Activated T-helper 1 cell treated with anti-CD3 and anti-CD28 coated beads, Interleukin-12 subunit alpha, Interleukin-12 subunit beta, Interleukin-2, Interleukin-4 antibody, amounts not matched to agents 30 ng/mL and 10 ng/mL and 1 ng/mL, durations not matched to agents 14 hours and 24 hours and 36 hours (primary cell): ENCODE measurements at regions of chr20 and their contacts with region 1.

Region 1: GRCh38 chr20:63009045-63009961 is 2.5 kb upstream of the BHLHE23 start:
- DNase-seq: peak; percentile 71
- H3K4me3 Mint-ChIP-seq: no peak overlapping the region
- H3K27ac Mint-ChIP-seq: peak overlapping the region; percentile 55
- H3K4me1 Mint-ChIP-seq: peaks cover 7% of the 10 kb centered on the region
- H3K27me3 Mint-ChIP-seq: peaks cover 66% of the 10 kb centered on the region

Region 2: DNA sequence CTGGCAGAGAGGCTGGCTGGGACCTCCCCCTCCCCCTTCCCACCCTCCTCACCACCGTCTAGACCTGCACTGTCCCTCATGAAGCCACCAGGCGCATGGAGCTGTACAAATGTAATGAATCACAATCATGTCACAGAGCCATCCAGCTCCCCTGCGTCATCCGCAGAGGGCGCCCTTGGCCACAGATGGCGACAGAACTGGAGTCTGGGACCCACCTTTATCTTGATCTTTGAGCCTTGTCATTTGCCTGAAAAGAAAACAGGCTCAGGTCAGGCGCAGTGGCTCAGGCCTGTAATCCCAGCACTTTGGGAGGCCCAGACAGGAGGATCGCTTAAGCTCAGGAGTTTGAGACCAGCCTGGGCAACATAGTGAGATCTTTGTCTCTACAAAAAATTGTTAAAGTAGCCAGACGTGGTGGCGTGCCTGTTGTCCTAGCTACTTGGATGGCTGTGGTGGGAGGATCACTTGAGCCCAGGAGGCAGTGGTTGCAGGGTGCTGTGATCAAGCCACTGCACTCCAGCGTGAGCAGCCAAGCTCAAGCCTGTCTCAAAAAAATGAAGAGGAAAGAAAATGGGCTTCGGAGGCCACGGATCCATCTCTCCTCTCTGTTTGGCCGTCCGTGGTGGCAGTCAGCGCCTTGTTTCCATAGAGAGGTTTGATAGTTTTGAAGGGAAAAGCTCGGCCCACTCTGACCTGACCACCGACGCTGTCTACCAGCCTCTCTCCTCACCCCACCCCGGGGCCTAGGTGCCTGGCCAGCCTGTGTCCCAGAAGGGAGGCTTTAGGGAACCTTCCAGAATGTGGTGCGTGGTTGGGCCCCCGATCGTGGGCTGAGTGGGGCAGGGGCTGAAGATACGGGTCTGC is 186.3 kb before region 1 on chr20:
- intact Hi-C with region 1: loop called (anchors 5 kb)
- DNase-seq: no peak
- H3K4me3 Mint-ChIP-seq: no peak overlapping the region
- H3K27ac Mint-ChIP-seq: no peak overlapping the region
- H3K4me1 Mint-ChIP-seq: no peaks in the 10 kb centered on the region
- H3K27me3 Mint-ChIP-seq: peaks cover 4% of the 10 kb centered on the region

Region 3: GRCh38 chr20:62873280-62873679 is 136.0 kb before region 1 on chr20:
- intact Hi-C with region 1: loop called (anchors 1 kb)
- DNase-seq: no peak
- H3K4me3 Mint-ChIP-seq: no peak overlapping the region
- H3K27ac Mint-ChIP-seq: no peak overlapping the region
- H3K4me1 Mint-ChIP-seq: peaks cover 9% of the 10 kb centered on the region
- H3K27me3 Mint-ChIP-seq: peaks cover 3% of the 10 kb centered on the region

Region 4: DNA sequence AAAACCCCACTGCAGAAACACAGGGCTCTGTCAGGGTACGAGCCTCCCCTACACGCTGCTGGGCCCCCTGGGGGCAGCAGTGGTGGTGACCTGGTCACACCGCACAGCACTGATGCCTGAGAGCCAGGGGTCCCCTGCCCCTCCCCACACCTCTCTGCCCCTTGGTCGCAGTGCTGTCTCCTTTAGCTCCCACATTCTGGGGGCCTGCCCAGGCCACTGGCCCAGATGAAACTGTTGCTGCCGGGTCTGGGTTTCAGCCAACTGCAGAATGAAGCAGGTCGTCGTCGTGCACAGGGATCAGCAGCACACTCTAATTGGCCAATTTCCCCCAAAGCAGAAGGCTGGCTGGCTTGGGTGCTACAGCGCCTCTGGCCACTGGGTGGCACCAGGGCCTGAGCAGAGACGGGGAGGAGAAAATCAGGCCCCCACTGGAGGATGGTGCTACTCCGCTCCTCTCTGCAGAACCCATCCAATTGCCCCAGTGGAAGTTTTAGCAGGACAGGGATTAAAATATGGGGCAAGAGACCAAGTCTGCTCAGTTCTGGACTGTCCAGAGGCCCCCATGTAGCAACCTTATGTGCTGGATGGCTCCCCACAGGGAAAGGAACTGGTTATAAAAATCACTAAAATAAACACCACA is 109.1 kb before region 1 on chr20:
- intact Hi-C with region 1: loop called (anchors 1 kb)
- DNase-seq: peak; percentile 60
- H3K4me3 Mint-ChIP-seq: peak overlapping the region; percentile 30
- H3K27ac Mint-ChIP-seq: peak overlapping the region; percentile 70
- H3K4me1 Mint-ChIP-seq: peaks cover 37% of the 10 kb centered on the region
- H3K27me3 Mint-ChIP-seq: no peaks in the 10 kb centered on the region

Region 5: DNA sequence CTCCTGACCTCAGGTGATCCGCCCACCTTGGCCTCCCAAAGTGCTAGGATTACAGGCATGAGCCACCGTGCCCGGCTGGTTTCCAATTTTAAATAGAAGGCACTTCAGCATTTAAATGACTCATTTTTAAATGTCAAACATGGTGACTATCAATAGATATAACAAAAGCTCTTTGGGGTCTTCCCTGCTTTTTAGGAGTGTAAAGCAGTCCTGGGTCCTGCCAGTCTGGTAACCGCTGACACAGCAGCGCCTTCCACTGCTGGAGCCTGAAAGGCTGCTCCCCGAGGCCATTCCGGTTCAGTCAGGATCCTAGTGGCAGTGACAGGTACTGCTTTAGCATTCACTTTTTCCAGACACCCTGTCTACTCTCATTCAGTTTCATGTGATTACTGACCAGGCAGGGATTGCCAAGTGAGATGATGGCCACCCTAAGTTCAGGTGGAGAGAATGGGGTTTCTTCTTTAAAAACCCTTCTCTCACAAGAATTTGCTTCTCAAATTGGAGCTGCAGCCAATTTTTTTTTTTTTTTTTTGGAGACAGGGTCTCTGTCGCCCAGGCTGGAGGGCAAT is 88.1 kb before region 1 on chr20:
- intact Hi-C with region 1: loop called (anchors 5 kb)
- DNase-seq: peak; percentile 54
- H3K4me3 Mint-ChIP-seq: peak overlapping the region; percentile 69
- H3K27ac Mint-ChIP-seq: peak overlapping the region; percentile 86
- H3K4me1 Mint-ChIP-seq: peaks cover 78% of the 10 kb centered on the region
- H3K27me3 Mint-ChIP-seq: no peaks in the 10 kb centered on the region

Region 6: DNA sequence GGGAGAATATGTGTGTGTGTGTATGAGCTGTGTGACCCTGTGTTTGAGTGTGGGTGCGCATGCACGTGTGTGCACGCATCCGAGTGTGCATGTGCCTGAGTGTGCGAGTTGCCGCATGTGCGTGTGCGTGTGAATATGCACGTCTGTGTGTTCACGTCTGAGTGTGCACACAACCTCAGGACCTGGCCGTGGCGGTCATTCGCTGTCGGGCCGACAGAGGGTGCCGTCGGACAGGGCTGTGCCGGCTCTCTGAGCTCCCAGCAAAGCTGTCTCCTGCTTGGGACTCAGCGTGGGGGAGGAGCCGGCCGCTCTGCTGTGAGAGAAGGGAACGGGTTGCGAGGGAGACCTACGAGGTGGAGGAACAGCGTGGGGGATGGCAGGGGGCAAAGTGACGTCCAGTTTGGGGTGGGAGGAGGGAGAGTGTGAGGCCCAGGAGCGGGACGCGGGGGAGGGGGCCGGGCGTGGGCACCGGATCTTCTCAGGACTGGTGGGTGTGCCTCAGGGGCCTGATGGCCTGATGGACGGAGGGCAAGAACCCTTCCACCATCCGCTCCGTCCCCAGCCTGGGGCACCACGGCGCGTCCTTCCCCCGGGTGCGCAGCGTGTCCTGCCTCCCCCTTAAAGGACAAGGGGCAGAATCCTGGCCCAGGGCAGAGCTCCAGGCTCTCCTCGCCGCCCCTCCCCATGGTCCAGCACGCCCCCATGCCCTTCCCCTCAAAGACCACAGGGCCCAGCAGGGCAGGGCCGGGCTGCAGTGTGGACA is 36.9 kb before region 1 on chr20:
- intact Hi-C with region 1: loop called (anchors 1 kb)
- DNase-seq: peak; percentile 78
- H3K4me3 Mint-ChIP-seq: peak overlapping the region; percentile 43
- H3K27ac Mint-ChIP-seq: no peak overlapping the region
- H3K4me1 Mint-ChIP-seq: peaks cover 14% of the 10 kb centered on the region
- H3K27me3 Mint-ChIP-seq: peaks cover 33% of the 10 kb centered on the region

Region 7: DNA sequence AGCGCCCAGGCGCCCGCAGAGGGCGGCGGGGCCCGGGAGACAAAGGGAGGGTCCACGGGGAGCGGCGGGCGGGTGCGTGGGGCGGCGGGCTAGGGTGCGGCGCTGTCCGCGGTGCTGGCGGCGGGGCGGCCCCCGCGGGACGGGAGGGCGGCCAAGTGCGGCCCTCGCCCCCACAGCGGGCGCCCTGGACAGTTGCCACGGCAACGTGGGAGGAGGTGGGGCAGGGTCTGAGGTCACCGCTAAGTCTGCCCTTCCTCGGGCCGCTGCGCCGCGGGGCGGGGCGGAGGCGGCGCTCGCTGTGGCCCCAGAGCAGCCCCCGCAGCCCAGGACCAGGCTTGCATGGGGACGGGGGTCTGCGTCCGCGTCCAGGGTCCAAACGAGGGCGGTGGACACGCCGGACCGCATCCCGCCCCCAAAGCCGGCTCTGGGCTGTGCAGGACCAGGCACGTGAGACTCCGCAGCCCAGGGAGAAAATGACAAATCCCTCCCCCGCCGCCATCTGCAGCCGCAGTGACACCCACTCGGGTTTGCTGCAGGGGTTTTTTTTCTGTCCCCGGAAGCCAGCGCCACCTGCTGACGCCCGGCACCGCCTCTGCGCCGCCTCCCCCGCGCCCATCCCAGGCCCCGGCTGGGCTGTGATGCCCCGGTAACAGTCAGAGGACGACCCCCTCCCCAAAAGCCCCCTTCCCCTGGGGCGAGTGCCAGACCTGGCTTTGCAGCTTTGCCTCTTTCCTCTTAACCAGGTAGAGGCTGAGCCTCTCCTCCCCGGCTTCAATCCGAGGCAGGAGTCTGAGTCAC is 169.8 kb after region 1 on chr20:
- intact Hi-C with region 1: loop called (anchors 5 kb)
- DNase-seq: peak; percentile 33
- H3K4me3 Mint-ChIP-seq: no peak overlapping the region
- H3K27ac Mint-ChIP-seq: peak overlapping the region; percentile 67
- H3K4me1 Mint-ChIP-seq: no peaks in the 10 kb centered on the region
- H3K27me3 Mint-ChIP-seq: peaks cover 22% of the 10 kb centered on the region